ENCODE measurements at regions of chr9 and their contacts with region 1.

Region 1: DNA sequence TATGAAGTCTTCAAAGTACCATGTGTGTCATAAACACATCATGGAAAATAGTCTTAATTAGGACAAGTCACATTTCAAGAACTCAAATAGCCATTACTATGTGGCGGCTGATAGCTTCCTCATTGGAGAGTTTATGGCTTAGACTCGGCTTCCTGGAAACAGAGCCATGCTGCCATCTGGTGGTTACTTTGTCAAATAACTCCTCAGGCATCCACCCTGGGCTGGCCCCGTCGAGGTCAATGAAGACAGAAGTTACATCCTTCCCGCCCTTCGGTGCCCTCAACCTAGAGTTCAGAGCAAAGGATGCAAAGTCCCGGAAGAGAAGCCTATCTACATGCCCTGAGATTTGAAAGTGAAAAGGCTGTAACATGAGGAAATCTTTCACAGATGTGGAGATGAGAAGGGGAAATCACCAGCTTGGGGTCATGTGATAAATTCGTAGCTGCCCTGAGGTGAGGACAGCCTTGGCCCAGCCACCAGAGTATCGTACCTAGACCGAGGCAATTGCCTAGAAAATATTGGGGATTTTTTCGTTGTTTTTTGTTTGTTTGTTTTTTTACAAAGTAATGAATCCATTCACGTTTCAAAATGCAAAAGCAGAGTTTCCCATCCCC is 45.5 kb upstream of the ZNF169 start:
- DNase-seq: peak; percentile 17 to 81
- H3K4me3 ChIP-seq: no peak overlapping the region
- H3K27ac ChIP-seq: no peak overlapping the region
- H3K4me1 ChIP-seq: peaks cover 0 to 3% of the 10 kb centered on the region in 2 donors
- H3K27me3 ChIP-seq: no peaks in the 10 kb centered on the region
- CTCF ChIP-seq: peak; percentile 79 to 87 (median 82)

Region 2: DNA sequence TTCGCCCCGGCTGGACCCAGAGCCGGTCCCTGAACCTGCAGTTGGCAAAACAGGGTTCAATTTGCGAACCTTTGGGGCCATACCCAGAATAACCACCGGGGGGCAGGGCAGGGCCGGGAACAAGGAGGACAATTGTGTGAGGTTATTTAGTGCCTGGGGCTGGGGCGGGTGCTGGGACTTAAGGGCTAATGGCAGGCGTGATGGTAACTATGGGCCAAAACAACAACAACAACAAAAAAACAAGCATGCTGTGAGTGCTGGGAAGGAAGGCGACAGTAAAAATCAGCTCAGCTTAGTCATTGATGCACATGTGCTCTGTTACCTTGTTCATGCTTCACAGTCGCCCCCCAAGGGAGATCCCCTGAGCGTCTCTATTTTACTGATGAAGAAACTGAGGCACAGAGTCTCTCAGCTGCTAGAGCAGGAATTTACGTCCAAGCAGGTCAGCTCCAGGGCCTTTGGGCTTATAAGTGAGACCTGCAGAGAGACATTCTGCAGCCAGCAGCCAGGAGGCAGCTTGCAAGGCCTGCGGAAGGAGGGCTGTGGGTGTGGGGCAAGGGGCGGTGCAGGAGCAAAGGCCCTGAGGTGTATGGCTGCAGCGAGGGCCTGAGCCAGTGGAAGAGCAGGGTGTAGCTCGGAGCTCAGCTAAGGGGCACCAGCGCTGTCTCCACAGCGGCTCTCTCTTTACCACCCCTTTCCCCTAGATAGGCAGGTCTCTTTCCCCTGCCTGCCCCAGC is 531.2 kb before region 1 on chr9:
- intact Hi-C with region 1: loop called (anchors 10 kb)
- DNase-seq: peak in 1 of 2 donors; percentile 67
- H3K4me3 ChIP-seq: no peak overlapping the region
- H3K27ac ChIP-seq: no peak overlapping the region
- H3K4me1 ChIP-seq: no peaks in the 10 kb centered on the region
- H3K27me3 ChIP-seq: no peaks in the 10 kb centered on the region
- CTCF ChIP-seq: peak; percentile 48 to 78 (median 77)

Region 3: DNA sequence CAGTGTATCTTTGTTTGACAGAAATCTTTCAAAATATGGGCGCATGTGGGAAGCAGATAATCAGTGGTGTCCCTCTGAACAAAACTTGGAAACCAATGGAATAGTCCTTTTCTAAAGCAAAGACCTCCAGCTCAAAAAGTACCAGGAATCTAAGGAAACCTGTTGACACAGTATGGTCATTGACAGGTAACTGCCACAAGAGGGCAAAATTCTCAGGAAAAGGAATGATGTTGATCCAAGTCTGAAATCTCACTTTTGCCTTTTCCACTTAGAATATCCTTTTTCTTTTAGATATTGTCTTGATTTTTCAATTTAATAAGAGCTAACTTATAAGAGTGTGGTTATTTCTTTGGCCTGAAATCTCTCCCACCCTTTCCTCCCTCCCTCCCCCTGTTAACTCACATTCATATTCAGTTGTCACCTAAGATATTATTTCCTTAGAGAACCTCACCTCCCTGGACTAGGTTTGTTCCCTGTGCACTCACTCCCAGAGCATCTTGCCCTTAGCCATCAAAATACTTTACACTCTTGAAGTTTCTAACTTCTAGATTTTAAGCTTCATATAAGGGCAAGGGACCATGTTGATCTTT is 199.5 kb before region 1 on chr9:
- intact Hi-C with region 1: loop called (anchors 1 kb)
- DNase-seq: no peak
- H3K4me3 ChIP-seq: no peak overlapping the region
- H3K27ac ChIP-seq: no peak overlapping the region
- H3K4me1 ChIP-seq: peaks cover 0 to 4% of the 10 kb centered on the region in 2 donors
- H3K27me3 ChIP-seq: no peaks in the 10 kb centered on the region
- CTCF ChIP-seq: peak; percentile 27 to 55 (median 44)

Region 4: DNA sequence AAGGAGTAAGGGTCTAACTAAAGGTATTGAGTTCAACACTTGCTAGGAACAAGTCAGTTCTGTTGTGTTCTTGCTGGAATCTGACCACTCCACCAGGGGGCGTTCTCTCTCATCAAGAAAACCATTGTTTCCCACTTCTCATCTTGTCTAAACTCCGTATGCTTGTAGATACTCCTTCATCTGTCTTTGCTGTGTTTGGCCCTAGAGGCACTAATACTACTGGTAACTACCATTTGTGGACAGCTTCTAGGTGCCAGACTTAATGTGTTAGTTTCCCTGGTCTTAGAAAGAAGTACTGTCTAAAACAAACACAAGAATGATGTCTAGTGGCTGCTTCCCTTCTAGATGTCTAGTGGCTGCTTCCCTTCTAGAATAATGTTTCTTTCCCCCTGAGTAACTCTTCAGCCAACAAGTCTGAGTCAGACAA is 148.1 kb before region 1 on chr9:
- intact Hi-C with region 1: loop called (anchors 1 kb)
- DNase-seq: peak in 1 of 2 donors; percentile 88
- H3K4me3 ChIP-seq: no peak overlapping the region
- H3K27ac ChIP-seq: peak overlapping the region; percentile 31 to 53
- H3K4me1 ChIP-seq: peaks cover 2 to 3% of the 10 kb centered on the region in 2 donors
- H3K27me3 ChIP-seq: no peaks in the 10 kb centered on the region
- CTCF ChIP-seq: peak; percentile 74 to 88 (median 86)

Region 5: DNA sequence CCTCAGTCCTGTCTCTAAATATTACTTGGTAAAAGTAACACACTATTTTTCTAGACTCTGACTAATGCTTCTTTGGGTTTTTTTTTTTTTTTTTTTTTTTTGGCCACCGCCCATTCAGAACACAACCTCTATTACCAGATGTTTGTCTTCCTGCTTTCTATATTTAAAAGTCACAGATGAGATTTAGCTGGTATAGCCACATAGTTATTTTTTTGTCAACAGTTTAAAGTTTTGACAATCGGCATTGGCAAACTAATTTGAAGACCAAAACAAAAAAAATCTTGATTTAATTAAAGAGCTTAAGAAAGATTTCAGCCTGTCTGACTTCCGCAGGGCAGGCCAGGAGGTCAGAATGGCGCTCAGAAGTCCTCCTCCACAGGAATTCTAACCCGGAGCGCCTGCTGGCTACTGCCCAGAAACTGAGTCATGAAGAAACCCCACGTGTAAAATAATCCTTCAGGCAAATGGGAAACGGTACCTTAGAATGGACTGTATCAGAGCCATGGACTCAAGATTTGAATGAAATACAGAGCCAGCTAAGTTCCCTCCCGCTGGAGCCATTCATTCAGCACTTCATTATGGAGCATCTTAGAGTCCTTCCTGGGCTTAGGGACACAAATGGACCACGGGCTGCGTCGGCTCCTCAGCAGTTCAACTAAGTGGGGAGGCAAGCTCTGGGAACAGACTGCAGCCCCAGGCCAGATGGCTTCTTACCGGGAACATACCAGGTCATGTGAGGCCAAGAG is 73.8 kb before region 1 on chr9:
- intact Hi-C with region 1: loop called (anchors 2 kb)
- DNase-seq: peak; percentile 65 to 95
- H3K4me3 ChIP-seq: peak overlapping the region; percentile 9 to 47
- H3K27ac ChIP-seq: peak overlapping the region; percentile 95
- H3K4me1 ChIP-seq: peaks cover 24 to 71% of the 10 kb centered on the region in 2 donors
- H3K27me3 ChIP-seq: no peaks in the 10 kb centered on the region
- CTCF ChIP-seq: no peak

Region 6: GRCh38 chr9:94228616-94229015 is 15.0 kb after region 1 on chr9:
- intact Hi-C with region 1: no loop called
- DNase-seq: no peak
- H3K4me3 ChIP-seq: no peak overlapping the region
- H3K27ac ChIP-seq: no peak overlapping the region
- H3K4me1 ChIP-seq: no peaks in the 10 kb centered on the region
- H3K27me3 ChIP-seq: no peaks in the 10 kb centered on the region
- CTCF ChIP-seq: no peak

Measured in ascending aorta (tissue), 2 donors.